Transverse colon (tissue), 4 donors: ENCODE measurements at regions of chr10 and their contacts with region 1.

Region 1: DNA sequence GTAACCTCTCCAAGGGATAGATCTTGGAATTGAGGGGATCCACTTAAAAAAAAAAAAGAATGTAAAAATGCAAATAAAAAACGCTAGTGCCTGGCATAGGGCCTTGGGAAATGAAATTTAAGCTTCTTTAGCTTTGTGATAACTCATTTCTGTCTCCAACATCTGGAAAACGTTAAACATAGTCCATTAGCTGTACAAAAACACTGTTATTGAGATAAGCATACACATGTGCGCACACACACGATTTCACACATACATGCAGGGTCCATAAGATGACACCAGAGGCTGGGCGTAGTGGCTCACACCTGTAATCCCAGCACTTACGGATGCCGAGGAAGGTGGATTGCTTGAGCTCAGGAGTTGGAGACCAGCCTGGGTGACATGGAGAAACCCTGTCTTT is 13.7 kb upstream of the CUL2 start:
- DNase-seq: no peak
- H3K4me3 ChIP-seq: no peak overlapping the region
- H3K27ac ChIP-seq: no peak overlapping the region
- H3K4me1 ChIP-seq: no peaks in the 10 kb centered on the region
- H3K27me3 ChIP-seq: no peaks in the 10 kb centered on the region
- CTCF ChIP-seq: no peak
- EP300 ChIP-seq: no peak
- POLR2A ChIP-seq: no peak

Region 2: DNA sequence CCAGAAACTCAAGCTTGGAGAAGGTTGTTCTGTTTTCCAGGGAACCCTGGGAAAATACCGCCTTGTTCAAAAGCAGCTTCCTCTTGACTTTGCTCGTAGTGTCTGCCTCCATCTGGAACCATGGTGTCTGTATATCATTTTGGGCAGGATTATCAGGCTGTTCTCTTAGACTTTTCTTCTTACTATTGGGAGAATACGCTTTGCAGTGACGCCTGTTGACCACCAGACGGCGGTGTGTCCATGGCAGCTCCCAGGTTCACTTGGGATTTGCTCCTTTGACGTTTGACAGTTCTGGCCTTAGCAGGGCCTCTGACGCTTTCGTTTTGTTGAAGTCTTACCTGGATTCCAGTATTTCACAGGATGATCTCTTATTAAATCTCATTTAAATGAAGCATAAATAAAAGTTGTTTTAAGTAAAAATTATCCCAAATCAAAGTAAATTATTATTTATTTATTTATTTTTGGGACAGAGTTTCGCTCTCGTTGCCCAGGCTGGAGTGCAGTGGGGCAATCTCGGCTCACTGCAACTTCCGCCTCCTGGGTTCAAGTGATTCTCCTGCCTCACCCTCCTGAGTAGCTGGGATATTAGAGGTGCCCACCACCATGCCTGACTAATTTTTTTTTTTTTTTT is 459.5 kb after region 1 on chr10:
- in situ Hi-C with region 1: loop called in 1 of 4 experiments (anchors 25 kb)
- intact Hi-C with region 1: no loop called
- DNase-seq: peak; percentile 60
- H3K4me3 ChIP-seq: no peak overlapping the region
- H3K27ac ChIP-seq: no peak overlapping the region
- H3K4me1 ChIP-seq: peaks cover 0 to 21% (median 7%) of the 10 kb centered on the region in 4 donors
- H3K27me3 ChIP-seq: no peaks in the 10 kb centered on the region
- CTCF ChIP-seq: peak; percentile 87 to 98 (median 97)
- EP300 ChIP-seq: no peak
- POLR2A ChIP-seq: no peak